Right ventricle myocardium superior (tissue), 1 donor: ENCODE measurements at regions of chr12 and their contacts with region 1.

Region 1: DNA sequence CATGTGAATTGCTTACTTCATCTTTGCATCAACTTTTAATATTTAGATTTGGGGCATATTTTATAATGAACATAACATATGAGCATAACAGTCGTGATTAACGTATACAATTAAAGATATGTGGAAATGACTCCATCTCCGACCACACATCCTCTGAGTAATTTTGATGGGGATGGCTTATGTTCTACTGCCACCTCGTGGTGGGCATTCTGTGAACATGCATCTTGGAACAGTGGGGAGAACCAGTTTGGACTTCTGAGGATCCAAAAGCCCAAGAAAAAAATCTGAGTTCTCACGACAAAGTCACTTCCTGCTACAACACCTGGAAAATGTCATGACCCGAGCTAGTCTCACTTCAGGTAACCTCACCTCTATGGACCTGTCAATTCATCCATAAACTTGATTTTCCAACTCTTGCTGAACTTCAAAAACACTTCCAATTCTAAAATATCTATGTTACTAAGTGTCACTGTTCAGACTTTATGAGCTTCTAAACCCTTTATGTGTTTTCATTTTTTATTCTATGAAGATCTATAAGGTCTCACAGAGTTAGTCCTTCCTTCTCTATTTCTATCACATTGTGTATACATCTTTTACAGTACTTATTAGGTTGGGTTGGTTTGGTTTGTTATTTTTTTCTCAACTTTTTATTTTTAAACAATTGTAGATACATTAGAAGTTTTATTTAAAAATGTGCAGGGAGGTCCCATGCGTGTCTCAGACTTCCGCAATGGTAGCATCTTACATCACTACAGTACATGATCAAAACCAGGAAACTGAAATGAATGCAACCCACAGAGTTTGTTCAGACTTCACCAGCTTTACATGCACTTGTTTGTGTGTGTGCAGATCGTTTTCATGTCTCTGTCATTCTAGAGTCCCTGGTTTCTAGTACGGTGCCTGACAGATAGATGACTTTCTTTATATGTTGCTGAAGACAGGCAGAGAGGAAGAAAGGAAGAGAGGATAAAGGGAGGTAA is 38.2 kb upstream of the STAB2 start:
- DNase-seq: no peak
- ATAC-seq: peak; percentile 82

Region 2: GRCh38 chr12:102883204-102883799 is 665.6 kb before region 1 on chr12:
- intact Hi-C with region 1: loop called (anchors 5 kb)
- DNase-seq: peak; percentile 53
- ATAC-seq: peak; percentile 75

Region 3: GRCh38 chr12:102948941-102949352 is 600.0 kb before region 1 on chr12:
- intact Hi-C with region 1: loop called (anchors 5 kb)
- DNase-seq: peak; percentile 55
- ATAC-seq: no peak